ENCODE measurements at regions of chr11 and their contacts with region 1.

Region 1: DNA sequence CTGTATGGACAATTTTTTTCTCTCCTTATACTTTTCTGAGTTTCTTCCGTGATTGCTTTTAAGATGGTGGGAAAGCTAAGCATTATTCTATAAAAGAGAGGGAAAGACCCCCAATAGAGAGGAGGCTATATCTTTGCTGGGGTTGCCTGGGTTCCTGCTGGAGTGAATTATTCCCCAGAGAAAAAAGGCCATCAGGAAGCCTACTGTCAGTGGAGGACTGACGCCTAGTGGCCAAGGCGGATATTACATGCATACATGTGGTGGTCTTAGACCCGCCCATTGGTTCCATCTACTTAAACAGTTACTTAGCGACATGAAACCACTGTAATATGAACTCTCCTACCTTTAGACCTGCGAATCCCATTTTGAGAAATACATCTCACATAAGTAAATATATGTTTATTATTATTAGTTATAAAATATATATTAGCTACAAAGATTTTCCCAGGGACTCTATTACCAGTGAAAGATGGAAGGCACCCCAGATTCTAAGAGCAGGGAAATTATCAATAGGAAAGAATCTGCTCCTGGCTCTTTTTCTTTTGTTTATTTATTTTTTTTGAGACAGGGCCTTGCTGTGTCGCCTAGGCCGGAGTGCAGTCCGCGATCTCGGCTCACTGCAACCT is 15.7 kb upstream of the PGA3 start:
- DNase-seq: peak; percentile 56 to 70
- H3K4me3 ChIP-seq: no peak overlapping the region
- H3K27ac ChIP-seq: no peak overlapping the region
- H3K4me1 ChIP-seq: no peaks in the 10 kb centered on the region
- H3K27me3 ChIP-seq: peaks cover 26% of the 10 kb centered on the region
- CTCF ChIP-seq: peak; percentile 99

Region 2: DNA sequence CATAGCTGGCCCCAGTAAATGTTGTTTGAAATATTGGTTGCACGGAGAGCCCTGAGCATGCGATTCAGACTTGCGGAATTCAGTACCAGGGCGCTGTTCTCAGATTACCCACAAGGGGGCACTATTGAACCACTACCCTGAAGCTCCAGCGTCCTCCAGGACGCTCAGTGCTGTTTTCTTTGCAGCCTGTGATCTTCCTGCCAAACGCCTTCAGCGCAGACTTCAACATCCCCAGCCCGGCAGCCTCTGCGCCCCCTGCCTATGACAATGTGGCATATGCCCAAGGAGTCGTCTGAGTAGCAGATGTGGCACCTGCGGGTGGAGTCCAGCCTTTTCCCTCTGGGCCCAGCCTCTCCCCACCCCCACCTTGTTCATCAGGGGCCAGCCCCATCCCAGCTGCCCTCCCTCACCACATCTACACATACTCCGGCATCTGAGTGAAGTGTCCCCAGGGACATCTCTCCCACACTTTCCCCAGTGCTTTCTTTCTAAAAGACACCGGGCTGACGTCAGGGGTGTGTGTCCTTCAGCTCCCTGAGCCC is 412.1 kb before region 1 on chr11:
- CTCF ChIA-PET with region 1: interaction called, 3 read pairs
- POLR2A ChIA-PET with region 1: no interaction called
- intact Hi-C with region 1: loop called (anchors 2 kb)
- DNase-seq: peak; percentile 70 to 87
- H3K4me3 ChIP-seq: no peak overlapping the region
- H3K27ac ChIP-seq: no peak overlapping the region
- H3K4me1 ChIP-seq: no peaks in the 10 kb centered on the region
- H3K27me3 ChIP-seq: peaks cover 43% of the 10 kb centered on the region
- CTCF ChIP-seq: peak; percentile 90

Region 3: DNA sequence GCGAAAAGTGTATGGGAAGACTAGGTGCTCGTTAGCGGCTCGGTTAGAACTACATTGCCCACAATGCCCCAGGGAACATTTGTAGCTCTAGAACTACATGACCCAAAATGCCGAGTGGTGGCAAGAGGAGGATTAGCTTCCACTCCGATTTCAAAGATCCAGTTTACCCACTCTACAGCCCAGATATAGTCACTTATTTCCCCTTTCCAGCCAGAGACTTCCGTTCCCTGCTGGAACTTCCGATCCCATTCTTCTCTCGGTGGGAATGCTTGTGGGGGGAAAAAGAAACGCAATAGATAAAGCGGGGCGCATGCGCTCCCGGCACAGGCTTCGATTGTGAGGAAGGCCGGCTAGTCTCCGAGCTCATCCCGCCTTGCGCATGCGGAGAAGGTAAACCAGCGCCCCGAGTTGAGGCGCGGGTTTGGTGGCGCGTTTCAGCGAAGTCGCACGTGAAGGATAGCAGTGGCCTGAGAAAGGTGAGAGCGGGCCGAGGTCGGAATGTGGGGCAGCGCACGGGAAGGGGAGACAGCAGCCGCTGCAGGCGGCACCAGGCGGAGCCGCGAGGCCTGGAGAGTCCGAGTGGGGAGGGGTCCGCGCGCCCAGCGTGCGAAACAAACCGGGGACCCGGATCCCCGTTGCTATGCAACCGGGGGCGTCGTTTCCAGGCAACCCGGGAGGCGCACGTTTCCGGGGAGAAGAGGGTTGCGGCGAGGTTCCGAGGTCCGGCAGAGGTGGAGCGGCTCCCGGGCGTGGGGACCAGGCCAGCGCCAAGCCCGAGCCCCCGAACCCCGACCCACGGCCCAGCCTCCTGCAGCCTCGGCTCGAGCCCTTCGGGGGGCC is 273.6 kb before region 1 on chr11 and contains the start of gene TMEM109:
- CTCF ChIA-PET with region 1: no interaction called
- POLR2A ChIA-PET with region 1: no interaction called
- intact Hi-C with region 1: loop called (anchors 2 kb)
- DNase-seq: peak; percentile 81 to 88
- H3K4me3 ChIP-seq: peak within 1 kb of the TSS; percentile 78
- H3K27ac ChIP-seq: peak within 1 kb of the TSS; percentile 62
- H3K4me1 ChIP-seq: peaks cover 36% of the 10 kb centered on the region
- H3K27me3 ChIP-seq: peaks cover 20% of the 10 kb centered on the region; the same call in 1 of the 2 replicates
- CTCF ChIP-seq: no peak
- total RNA-seq, gene TMEM109: 104 and 105 TPM in 2 replicates

Region 4: GRCh38 chr11:61082062-61082870 is 105.4 kb before region 1 on chr11:
- CTCF ChIA-PET with region 1: interaction called, 27 read pairs
- POLR2A ChIA-PET with region 1: no interaction called
- intact Hi-C with region 1: no loop called
- DNase-seq: no peak
- H3K4me3 ChIP-seq: no peak overlapping the region
- H3K27ac ChIP-seq: no peak overlapping the region
- H3K4me1 ChIP-seq: no peaks in the 10 kb centered on the region
- H3K27me3 ChIP-seq: peaks cover 5% of the 10 kb centered on the region; the same call in 1 of the 2 replicates
- CTCF ChIP-seq: no peak

Region 5: DNA sequence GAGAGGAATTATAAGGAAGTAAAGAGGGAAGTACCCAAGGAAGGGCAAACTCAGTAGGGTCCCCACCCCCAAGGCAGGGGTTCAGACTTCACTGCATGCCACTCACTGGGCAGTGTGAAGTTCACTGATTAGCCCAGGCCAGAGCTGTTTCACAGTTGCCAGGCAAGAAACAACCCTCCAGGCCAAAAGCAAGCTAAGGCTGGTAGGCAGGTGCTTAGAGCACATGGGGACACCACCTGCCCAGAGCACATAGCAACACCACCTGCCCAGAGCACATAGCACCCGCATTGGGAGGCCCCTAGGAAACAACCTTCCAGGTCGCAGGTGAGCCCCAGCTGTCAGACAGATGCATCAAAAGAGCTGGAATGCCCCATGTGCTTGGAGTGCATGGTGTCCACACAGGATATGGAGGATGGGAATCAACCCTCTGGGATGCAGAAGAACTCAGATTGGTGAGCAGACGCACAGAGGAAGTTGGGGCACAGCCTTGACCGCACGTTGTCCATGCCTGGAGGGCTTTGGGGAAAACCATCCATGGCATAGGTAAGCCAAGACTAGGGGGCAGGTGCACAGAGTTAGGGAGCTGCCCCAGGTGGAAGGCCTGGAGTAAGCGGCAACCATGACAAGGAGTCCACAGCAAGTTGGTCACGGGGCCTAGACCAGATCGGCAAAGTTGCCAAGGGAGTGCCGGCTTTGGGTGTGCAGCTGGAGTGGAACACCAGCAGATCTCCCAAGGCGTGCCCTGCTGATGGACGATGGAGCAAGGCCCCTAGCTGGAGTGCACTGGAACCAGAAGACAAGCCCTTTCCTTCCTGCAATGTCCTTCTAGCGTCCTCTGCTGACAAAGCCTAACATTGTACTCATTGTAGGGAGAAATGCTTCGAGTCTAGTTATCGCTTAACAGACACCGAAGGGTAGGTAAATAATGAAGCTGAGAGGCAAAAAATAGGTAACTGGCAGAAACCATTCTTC is 196.9 kb after region 1 on chr11:
- CTCF ChIA-PET with region 1: no interaction called
- POLR2A ChIA-PET with region 1: no interaction called
- intact Hi-C with region 1: loop called (anchors 2 kb)
- DNase-seq: no peak
- H3K4me3 ChIP-seq: no peak overlapping the region
- H3K27ac ChIP-seq: no peak overlapping the region
- H3K4me1 ChIP-seq: peaks cover 4% of the 10 kb centered on the region
- H3K27me3 ChIP-seq: no peaks in the 10 kb centered on the region
- CTCF ChIP-seq: no peak

Region 6: DNA sequence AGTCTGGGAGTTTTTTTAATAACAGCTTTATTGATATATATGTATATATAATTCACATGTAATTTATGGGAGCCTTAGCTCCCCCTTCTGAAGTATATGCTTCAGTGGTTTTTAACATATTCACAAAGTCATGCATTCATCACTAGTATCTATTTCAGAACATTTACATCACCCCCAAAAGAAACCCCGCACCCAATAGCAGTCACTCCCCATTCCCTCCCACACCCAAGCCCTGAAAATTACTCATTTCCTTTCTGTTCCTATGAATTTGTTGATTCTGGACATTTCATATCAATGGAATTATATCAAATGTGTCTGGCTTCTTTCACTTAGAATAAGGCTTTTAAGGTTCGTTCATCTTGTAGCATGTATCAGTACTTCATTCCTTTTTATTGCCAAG is 428.8 kb after region 1 on chr11:
- CTCF ChIA-PET with region 1: no interaction called
- POLR2A ChIA-PET with region 1: no interaction called
- intact Hi-C with region 1: no loop called
- DNase-seq: no peak
- H3K4me3 ChIP-seq: no peak overlapping the region
- H3K27ac ChIP-seq: 0 out of 2 replicates have a peak overlapping the region, but pooled peaks have one; percentile 28
- H3K4me1 ChIP-seq: peaks cover 17% of the 10 kb centered on the region
- H3K27me3 ChIP-seq: no peaks in the 10 kb centered on the region
- CTCF ChIP-seq: no peak